ENCODE measurements at regions of chr3 and their contacts with region 1.

Region 1: GRCh38 chr3:60365360-60365759 is 885.9 kb downstream of the FHIT start:
- DNase-seq: no peak
- ATAC-seq: no peak
- H3K4me3 ChIP-seq: no peak overlapping the region
- H3K27ac ChIP-seq: no peak overlapping the region
- H3K4me1 ChIP-seq: peaks cover 0 to 3% of the 10 kb centered on the region in 2 experiments; a peak in 2 of 4 replicates
- H3K27me3 ChIP-seq: no peaks in the 10 kb centered on the region
- CTCF ChIP-seq: no peak
- POLR2A ChIP-seq: no peak
- RAD21 ChIP-seq: no peak

Region 2: GRCh38 chr3:60316121-60316797 is 49.1 kb before region 1 on chr3:
- CTCF ChIA-PET with region 1: no interaction called
- POLR2A ChIA-PET with region 1: no interaction called
- RAD21 ChIA-PET with region 1: no interaction called
- intact Hi-C with region 1: loop called (anchors 10 kb)
- DNase-seq: no peak
- ATAC-seq: no peak
- H3K4me3 ChIP-seq: no peak overlapping the region
- H3K27ac ChIP-seq: no peak overlapping the region
- H3K4me1 ChIP-seq: no peaks in the 10 kb centered on the region
- H3K27me3 ChIP-seq: no peaks in the 10 kb centered on the region
- CTCF ChIP-seq: no peak
- POLR2A ChIP-seq: no peak
- RAD21 ChIP-seq: no peak

Measured in HCT116 (cell line).